Heart left ventricle (tissue), 16 donors: ENCODE measurements at regions of chr21 and their contacts with region 1.

Region 1: GRCh38 chr21:38531591-38531990 is 33.3 kb upstream of the ERG start:
- DNase-seq: peak in 2 of 5 donors; percentile 26 to 33
- ATAC-seq: peak in 2 of 4 donors; percentile 36 to 56
- H3K4me3 ChIP-seq: no peak overlapping the region
- H3K27ac ChIP-seq: no peak overlapping the region
- H3K4me1 ChIP-seq: no peaks in the 10 kb centered on the region
- H3K27me3 ChIP-seq: peaks cover 0 to 2% (median 0%) of the 10 kb centered on the region in 9 donors
- CTCF ChIP-seq: no peak
- POLR2A ChIP-seq: no peak

Region 2: DNA sequence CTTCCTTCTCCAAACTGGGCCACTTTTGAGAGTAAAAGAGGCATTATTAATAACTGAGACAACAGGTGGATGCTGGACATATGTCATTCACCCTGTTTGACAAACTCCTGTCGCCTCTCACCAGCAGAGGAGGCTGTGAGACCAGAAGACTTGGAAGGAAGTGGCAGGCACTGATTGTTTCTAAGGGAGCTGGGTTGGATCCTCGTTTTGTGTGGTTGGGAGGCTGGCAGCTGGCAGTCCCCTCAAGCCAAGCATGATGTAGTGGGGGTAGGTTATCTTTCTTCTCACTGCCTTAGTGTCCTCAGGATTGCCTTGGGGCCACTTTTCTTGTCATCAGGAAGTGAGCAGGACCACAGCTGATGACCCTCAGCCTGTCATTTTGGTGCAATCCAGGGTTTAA is 361.3 kb before region 1 on chr21:
- intact Hi-C with region 1: no loop called
- DNase-seq: peak in 1 of 5 donors; percentile 33
- ATAC-seq: peak in 2 of 4 donors; percentile 23 to 57
- H3K4me3 ChIP-seq: no peak overlapping the region
- H3K27ac ChIP-seq: no peak overlapping the region
- H3K4me1 ChIP-seq: peaks cover 0 to 30% (median 16%) of the 10 kb centered on the region in 12 donors
- H3K27me3 ChIP-seq: no peaks in the 10 kb centered on the region
- CTCF ChIP-seq: peak in 11 of 12 donors; percentile 12 to 47 (median 40)
- POLR2A ChIP-seq: no peak

Region 3: DNA sequence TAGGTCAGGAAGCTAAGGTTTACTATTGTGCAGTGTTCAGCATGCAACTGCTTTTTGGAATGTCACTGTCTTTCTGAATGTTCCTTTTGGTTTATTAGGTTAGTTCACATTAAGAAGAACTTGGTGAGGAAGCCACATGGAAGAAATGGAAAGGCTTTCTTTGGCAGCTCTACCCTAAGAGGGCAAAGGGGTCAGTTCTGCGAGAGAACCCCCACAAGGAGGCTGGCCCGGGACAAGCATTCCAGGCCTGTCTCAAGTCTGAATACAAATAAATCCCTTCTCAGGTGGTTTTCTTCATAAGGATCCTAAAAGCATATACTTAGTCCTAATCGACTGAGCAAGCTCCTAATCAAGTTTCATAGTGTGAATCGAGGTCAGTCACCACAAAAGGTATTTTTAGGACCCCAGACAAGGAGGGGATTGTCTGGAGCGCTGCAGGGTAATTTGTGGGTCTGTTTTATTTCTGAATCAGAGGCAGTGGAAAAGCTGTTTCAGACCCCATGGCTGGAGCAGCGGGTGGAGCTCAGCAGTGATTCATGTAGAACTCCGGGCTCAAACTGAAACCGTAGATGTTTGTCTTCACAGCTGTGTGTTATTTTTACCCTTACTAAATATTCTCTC is 96.6 kb before region 1 on chr21:
- intact Hi-C with region 1: no loop called
- DNase-seq: no peak
- ATAC-seq: peak in 2 of 4 donors; percentile 41 to 45
- H3K4me3 ChIP-seq: peak overlapping the region in 5 of 12 donors; percentile 2 to 33 (median 15)
- H3K27ac ChIP-seq: peak overlapping the region in 3 of 12 donors; percentile 33 to 64 (median 53)
- H3K4me1 ChIP-seq: peaks cover 3 to 44% (median 25%) of the 10 kb centered on the region in 12 donors
- H3K27me3 ChIP-seq: no peaks in the 10 kb centered on the region
- CTCF ChIP-seq: no peak
- POLR2A ChIP-seq: no peak

Region 4: GRCh38 chr21:38605236-38605635 is 73.6 kb after region 1 on chr21:
- intact Hi-C with region 1: loop called in 1 of 10 experiments (anchors 10 kb)
- DNase-seq: no peak
- ATAC-seq: no peak
- H3K4me3 ChIP-seq: no peak overlapping the region
- H3K27ac ChIP-seq: no peak overlapping the region
- H3K4me1 ChIP-seq: no peaks in the 10 kb centered on the region
- H3K27me3 ChIP-seq: peaks cover 0 to 7% (median 0%) of the 10 kb centered on the region in 9 donors
- CTCF ChIP-seq: no peak
- POLR2A ChIP-seq: no peak